Endothelial cell of umbilical vein (primary cell): ENCODE measurements at regions of chr3 and their contacts with region 1.

Region 1: GRCh38 chr3:194985031-194985578 is 285.9 kb downstream of the XXYLT1 start:
- DNase-seq: no peak
- H3K4me3 ChIP-seq: no peak overlapping the region
- H3K27ac ChIP-seq: no peak overlapping the region
- H3K4me1 ChIP-seq: no peaks in the 10 kb centered on the region
- H3K27me3 ChIP-seq: no peaks in the 10 kb centered on the region
- CTCF ChIP-seq: no peak
- POLR2A ChIP-seq: no peak

Region 2: DNA sequence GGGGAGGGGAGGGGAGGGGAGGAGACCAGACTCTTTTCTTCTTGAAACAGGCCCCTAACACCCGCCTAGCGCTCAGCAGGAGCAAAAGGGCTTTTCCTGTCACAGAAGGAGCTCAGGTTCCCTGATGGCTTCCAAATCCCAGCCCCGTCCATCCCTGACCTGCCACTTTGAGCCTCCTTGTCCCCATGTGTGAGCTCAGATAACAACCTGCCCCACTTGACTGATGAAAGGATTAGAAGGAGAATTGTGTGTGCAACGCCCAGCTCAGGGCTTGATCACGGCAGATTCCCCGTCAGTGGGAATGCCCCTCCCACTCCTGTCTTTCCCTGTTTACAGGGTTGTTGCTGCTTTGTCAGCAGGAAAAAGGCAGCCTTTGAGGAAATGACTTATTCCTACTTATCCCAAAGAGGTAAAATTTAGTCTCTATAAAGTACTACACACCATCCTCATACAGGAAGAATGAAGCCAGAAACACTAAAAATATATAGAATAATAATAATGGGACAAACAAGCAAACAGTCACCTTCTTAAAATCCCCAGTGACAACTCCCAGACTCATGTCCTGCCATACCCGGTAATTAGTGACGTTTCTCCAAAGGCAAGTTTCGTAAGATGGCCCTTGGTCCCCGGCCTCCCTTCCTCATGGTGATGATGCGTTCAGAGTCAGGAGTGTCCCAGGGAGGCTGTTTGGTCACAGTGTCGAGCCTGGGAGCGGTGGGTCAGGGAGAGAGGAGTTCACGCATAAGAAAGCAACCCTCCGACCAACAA is 609.4 kb before region 1 on chr3:
- CTCF ChIA-PET with region 1: no interaction called
- POLR2A ChIA-PET with region 1: no interaction called
- dilution Hi-C with region 1: no loop called
- intact Hi-C with region 1: no loop called
- DNase-seq: peak; percentile 68
- H3K4me3 ChIP-seq: peak overlapping the region in 1 of 3 experiments; percentile 34
- H3K27ac ChIP-seq: no peak overlapping the region
- H3K4me1 ChIP-seq: peaks cover 13% of the 10 kb centered on the region
- H3K27me3 ChIP-seq: peaks cover 2 to 5% of the 10 kb centered on the region in 2 experiments
- CTCF ChIP-seq: no peak
- POLR2A ChIP-seq: no peak

Region 3: DNA sequence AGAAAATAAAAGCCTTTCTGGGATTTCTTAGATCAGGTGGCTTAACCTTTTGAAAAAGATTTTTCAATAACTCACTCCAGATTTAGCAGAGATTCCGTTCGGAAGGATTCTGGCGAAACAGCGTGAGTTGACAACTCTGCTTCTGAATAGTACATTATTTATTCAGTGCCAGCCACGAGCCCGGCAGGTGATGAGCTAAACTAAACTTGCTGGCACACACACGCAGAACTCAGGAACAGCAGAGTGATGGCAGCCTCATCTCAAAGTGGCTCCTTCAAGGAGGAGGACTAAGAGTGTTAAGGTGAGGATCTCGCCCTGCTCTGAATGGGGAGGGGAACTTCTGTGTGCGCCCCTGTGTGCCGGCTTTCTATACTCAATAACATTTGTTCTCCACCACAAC is 185.1 kb before region 1 on chr3:
- CTCF ChIA-PET with region 1: no interaction called
- POLR2A ChIA-PET with region 1: no interaction called
- dilution Hi-C with region 1: no loop called
- intact Hi-C with region 1: no loop called
- DNase-seq: no peak
- H3K4me3 ChIP-seq: no peak overlapping the region
- H3K27ac ChIP-seq: no peak overlapping the region
- H3K4me1 ChIP-seq: no peaks in the 10 kb centered on the region
- H3K27me3 ChIP-seq: peaks cover 0 to 4% of the 10 kb centered on the region in 2 experiments
- CTCF ChIP-seq: no peak
- POLR2A ChIP-seq: no peak

Region 4: GRCh38 chr3:194952841-194953241 is 32.3 kb before region 1 on chr3:
- CTCF ChIA-PET with region 1: no interaction called
- POLR2A ChIA-PET with region 1: no interaction called
- dilution Hi-C with region 1: no loop called
- intact Hi-C with region 1: loop called (anchors 1 kb)
- DNase-seq: peak; percentile 21
- H3K4me3 ChIP-seq: no peak overlapping the region
- H3K27ac ChIP-seq: no peak overlapping the region
- H3K4me1 ChIP-seq: peaks cover 6% of the 10 kb centered on the region
- H3K27me3 ChIP-seq: no peaks in the 10 kb centered on the region
- CTCF ChIP-seq: no peak
- POLR2A ChIP-seq: no peak